PC-9 (cell line): ENCODE measurements at regions of chr6 and their contacts with region 1.

Region 1: DNA sequence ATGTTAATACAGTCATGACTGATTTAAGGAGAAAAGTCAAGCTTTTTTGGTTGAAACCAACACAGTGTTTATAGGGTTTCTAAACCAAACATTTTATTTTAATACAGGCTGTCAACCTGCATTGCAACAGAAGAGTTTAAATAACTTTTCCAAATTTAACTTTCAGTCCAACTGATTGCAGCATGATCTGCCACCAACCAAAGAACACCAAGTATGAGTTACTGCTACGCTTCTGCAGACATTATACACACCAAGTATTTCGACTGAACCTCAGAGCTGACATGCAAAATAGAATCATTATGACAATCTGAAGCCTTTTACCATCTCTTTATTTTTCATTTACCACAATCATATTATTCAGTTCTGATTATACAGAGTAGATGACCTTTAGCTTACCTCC is 151.2 kb upstream of the DST start:
- DNase-seq: no peak
- H3K4me3 ChIP-seq: no peak overlapping the region
- H3K27ac ChIP-seq: no peak overlapping the region
- H3K4me1 ChIP-seq: peaks cover 27% of the 10 kb centered on the region
- H3K27me3 ChIP-seq: no peaks in the 10 kb centered on the region
- CTCF ChIP-seq: no peak

Region 2: GRCh38 chr6:56613247-56613851 is 180.6 kb before region 1 on chr6:
- CTCF ChIA-PET with region 1: no interaction called
- POLR2A ChIA-PET with region 1: interaction called, 14 read pairs
- intact Hi-C with region 1: no loop called
- DNase-seq: no peak
- H3K4me3 ChIP-seq: no peak overlapping the region
- H3K27ac ChIP-seq: no peak overlapping the region
- H3K4me1 ChIP-seq: no peaks in the 10 kb centered on the region
- H3K27me3 ChIP-seq: no peaks in the 10 kb centered on the region
- CTCF ChIP-seq: no peak